ENCODE measurements at regions of chr2 and their contacts with region 1.

Region 1: GRCh38 chr2:151051574-151052220 is 210.0 kb downstream of the RBM43 start:
- DNase-seq: no peak
- ATAC-seq: no peak
- H3K4me3 ChIP-seq: no peak overlapping the region
- H3K27ac ChIP-seq: no peak overlapping the region
- H3K4me1 ChIP-seq: no peaks in the 10 kb centered on the region
- H3K27me3 ChIP-seq: no peaks in the 10 kb centered on the region
- CTCF ChIP-seq: peak in 4 of 5 experiments; percentile 21 to 54 (median 41)
- POLR2A ChIP-seq: no peak

Region 2: DNA sequence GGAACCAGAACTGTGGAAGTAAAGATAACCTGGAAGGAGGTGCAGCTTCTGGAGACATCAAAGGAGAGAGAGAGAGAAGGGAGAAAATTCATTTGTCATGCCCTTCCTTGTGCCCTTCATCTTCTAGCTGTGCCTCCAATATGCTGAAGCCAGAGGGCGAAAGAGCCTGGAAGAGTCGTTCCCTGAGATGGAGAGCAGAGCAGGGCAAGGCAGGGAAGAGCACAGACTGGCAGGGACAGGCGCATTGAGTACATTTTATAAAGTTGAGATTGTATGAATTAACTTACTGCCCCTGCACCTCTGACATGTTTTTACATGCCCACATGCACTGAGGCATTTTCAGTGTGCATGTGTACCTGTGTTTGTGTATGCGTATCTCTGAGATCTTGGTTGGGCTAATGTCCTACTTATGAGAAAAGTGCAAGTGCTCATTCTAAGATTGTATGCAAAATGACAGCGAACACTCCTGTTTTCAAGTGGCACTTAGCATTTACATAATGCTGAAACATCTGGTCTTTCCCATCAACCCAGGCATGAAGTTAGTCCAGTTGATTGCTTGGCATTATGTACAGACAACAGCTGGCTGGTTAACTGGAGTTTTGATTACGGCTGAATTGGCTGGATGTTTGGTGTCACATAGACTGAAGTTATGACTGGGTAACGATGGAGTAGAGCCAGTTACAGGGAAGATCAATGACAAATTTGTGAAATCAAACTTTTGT is 1440.4 kb before region 1 on chr2:
- in situ Hi-C with region 1: loop called in 2 of 4 experiments (anchors 25 kb)
- intact Hi-C with region 1: no loop called
- DNase-seq: no peak
- ATAC-seq: peak in 1 of 2 donors; percentile 19
- H3K4me3 ChIP-seq: no peak overlapping the region
- H3K27ac ChIP-seq: no peak overlapping the region
- H3K4me1 ChIP-seq: peaks cover 0 to 9% of the 10 kb centered on the region in 2 donors
- H3K27me3 ChIP-seq: no peaks in the 10 kb centered on the region
- CTCF ChIP-seq: no peak
- POLR2A ChIP-seq: no peak

Region 3: GRCh38 chr2:149799013-149799705 is 1252.5 kb before region 1 on chr2:
- in situ Hi-C with region 1: loop called in 1 of 4 experiments (anchors 25 kb)
- intact Hi-C with region 1: loop called (anchors 10 kb)
- DNase-seq: no peak
- ATAC-seq: no peak
- H3K4me3 ChIP-seq: no peak overlapping the region
- H3K27ac ChIP-seq: no peak overlapping the region
- H3K4me1 ChIP-seq: no peaks in the 10 kb centered on the region
- H3K27me3 ChIP-seq: no peaks in the 10 kb centered on the region
- CTCF ChIP-seq: peak in 1 of 5 experiments; percentile 14
- POLR2A ChIP-seq: no peak

Region 4: GRCh38 chr2:149808556-149808955 is 1243.1 kb before region 1 on chr2:
- in situ Hi-C with region 1: no loop called
- intact Hi-C with region 1: loop called (anchors 10 kb)
- DNase-seq: no peak
- ATAC-seq: no peak
- H3K4me3 ChIP-seq: no peak overlapping the region
- H3K27ac ChIP-seq: no peak overlapping the region
- H3K4me1 ChIP-seq: no peaks in the 10 kb centered on the region
- H3K27me3 ChIP-seq: no peaks in the 10 kb centered on the region
- CTCF ChIP-seq: no peak
- POLR2A ChIP-seq: no peak

Measured in gastrocnemius medialis (tissue), 4 donors.